ENCODE measurements at regions of chr9 and their contacts with region 1.

Region 1: DNA sequence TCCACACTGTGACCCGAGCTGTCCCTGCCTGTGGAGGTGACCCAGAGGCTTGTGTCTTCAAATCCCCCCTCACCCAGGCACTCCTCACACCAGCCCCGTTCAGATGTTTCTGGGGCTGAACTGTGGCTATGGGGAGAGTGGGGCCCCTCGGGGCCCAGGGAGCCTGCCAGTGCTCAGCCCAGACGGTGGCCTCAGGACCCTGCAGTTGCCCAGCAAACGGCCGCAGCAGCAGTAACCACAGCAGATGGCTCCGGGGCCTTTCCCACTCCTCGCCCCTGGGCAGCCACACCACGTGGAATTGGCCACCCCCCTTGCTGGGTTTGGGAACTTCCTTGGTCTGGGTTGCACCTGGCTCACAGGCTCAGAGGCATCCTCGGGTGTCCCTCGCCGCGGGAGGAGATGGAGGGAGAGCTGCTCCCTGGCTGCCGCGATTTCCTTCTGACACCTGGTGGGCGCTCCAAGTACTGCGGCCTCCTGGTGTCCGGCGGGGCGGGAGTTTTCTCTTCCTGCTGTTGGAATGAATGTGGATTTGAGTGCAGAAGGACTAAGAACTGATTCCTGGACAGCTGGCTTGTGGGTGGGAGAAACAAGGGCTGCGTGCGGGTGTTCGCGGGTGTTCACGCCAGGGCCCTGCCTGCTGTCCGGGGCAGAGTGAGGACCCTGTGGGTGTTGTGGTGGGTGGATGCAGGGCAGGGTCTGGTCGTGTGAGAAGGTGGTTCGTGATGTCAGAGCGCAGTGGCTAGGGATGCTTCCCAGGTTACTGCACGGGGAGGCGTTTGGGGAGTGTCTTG is 97.5 kb downstream of the COL5A1 start:
- DNase-seq: peak; percentile 13
- ATAC-seq: peak; percentile 71
- H3K4me3 ChIP-seq: no peak overlapping the region
- H3K27ac ChIP-seq: no peak overlapping the region
- H3K4me1 ChIP-seq: 0 out of 2 replicates have a peak, but pooled peaks cover 5% of the 10 kb centered on the region
- H3K27me3 ChIP-seq: peaks cover 11 to 50% of the 10 kb centered on the region in 2 experiments
- CTCF ChIP-seq: peak; percentile 79
- EP300 ChIP-seq: no peak
- POLR2A ChIP-seq: no peak
- RAD21 ChIP-seq: peak; percentile 60

Region 2: GRCh38 chr9:134449221-134449894 is 289.7 kb before region 1 on chr9:
- CTCF ChIA-PET with region 1: interaction called, 7 read pairs
- POLR2A ChIA-PET with region 1: no interaction called
- in situ Hi-C with region 1: loop called (anchors 10 kb)
- intact Hi-C with region 1: loop called (anchors 5 kb)
- DNase-seq: peak; percentile 77
- ATAC-seq: peak; percentile 87
- H3K4me3 ChIP-seq: no peak overlapping the region
- H3K27ac ChIP-seq: no peak overlapping the region
- H3K4me1 ChIP-seq: no peaks in the 10 kb centered on the region
- H3K27me3 ChIP-seq: peaks cover 0 to 2% of the 10 kb centered on the region in 2 experiments; a peak in 1 of 5 replicates
- CTCF ChIP-seq: peak; percentile 93
- EP300 ChIP-seq: no peak
- POLR2A ChIP-seq: no peak
- RAD21 ChIP-seq: peak; percentile 89

Region 3: GRCh38 chr9:134455934-134456739 is 282.9 kb before region 1 on chr9:
- CTCF ChIA-PET with region 1: no interaction called
- POLR2A ChIA-PET with region 1: no interaction called
- in situ Hi-C with region 1: loop called (anchors 10 kb)
- intact Hi-C with region 1: no loop called
- DNase-seq: no peak
- ATAC-seq: no peak
- H3K4me3 ChIP-seq: no peak overlapping the region
- H3K27ac ChIP-seq: no peak overlapping the region
- H3K4me1 ChIP-seq: no peaks in the 10 kb centered on the region
- H3K27me3 ChIP-seq: peaks cover 2 to 43% of the 10 kb centered on the region in 2 experiments; a peak in 4 of 5 replicates
- CTCF ChIP-seq: no peak
- EP300 ChIP-seq: no peak
- POLR2A ChIP-seq: no peak
- RAD21 ChIP-seq: no peak

Region 4: DNA sequence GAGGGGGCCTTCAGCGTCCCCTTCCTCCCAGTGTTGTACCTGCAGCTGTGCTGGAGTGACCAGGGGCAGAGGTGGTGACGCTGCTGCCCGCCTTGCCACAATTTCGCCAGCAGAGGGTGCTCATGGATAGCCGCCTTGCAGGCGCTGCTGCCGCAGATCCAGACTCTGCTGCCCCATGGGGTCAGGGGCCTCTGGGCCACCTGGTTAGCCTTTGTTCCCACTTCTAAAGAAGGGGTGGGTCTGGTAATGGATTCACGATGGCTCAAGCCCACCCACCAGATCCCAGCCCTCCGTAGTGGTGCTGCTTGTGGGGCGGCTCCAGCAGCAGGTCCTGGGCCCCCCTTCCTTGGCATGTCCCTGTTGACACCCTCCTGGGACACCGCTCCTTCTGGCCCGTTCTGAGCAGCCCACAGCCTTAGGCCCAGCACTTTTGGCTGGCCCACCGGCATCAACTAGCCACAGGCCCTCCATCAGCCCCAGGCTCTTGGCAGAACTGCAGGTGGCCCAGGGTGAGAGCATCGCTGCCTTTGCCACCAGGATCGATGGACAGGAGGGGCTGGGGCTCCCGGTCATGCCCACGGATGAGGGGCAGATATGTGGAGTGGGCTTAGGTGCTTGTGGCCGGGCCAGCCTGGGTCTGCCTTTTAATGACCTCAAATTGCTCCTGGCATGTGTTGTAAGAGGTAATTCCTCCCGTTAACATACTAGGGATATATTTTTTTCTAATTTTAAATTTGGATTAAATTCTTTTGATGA is 40.3 kb before region 1 on chr9:
- CTCF ChIA-PET with region 1: interaction called, 23 read pairs
- POLR2A ChIA-PET with region 1: no interaction called
- in situ Hi-C with region 1: loop called (anchors 5 kb)
- intact Hi-C with region 1: loop called (anchors 2 kb)
- DNase-seq: peak; percentile 50
- ATAC-seq: peak; percentile 88
- H3K4me3 ChIP-seq: no peak overlapping the region
- H3K27ac ChIP-seq: no peak overlapping the region
- H3K4me1 ChIP-seq: no peaks in the 10 kb centered on the region
- H3K27me3 ChIP-seq: peaks cover 4 to 47% of the 10 kb centered on the region in 2 experiments; a peak in 4 of 5 replicates
- CTCF ChIP-seq: peak; percentile 93
- EP300 ChIP-seq: no peak
- POLR2A ChIP-seq: no peak
- RAD21 ChIP-seq: peak; percentile 89

Region 5: DNA sequence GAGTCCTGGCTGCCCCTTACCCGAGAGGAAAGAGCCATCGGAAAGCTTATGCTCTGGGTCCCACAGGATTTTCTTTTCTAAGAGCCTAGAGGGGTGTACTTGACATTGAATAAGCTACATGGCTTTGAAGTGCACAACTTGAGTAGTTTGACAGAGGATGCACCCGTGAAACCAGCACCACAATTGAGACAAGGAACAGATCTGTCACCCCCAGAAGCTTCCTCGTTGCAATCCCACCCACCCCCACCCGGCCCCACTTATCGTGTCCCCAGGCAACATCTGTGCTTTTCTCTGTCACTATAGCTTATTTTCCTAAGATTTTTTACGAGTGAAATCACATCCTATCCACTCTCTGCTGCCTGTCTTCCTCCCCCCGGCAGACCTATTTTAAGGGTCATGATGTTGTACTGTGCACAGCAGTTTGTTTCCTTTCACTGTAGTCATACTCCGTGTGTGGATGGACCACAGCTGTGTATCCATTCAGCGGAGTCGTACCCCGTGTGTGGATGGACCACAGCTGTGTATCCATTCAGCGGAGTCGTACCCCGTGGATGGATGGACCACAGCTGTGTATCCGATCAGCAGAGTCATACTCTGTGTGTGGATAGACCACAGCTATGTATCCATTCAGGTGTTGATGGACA is 132.8 kb after region 1 on chr9:
- CTCF ChIA-PET with region 1: no interaction called
- POLR2A ChIA-PET with region 1: no interaction called
- in situ Hi-C with region 1: no loop called
- intact Hi-C with region 1: no loop called
- DNase-seq: no peak
- ATAC-seq: no peak
- H3K4me3 ChIP-seq: no peak overlapping the region
- H3K27ac ChIP-seq: no peak overlapping the region
- H3K4me1 ChIP-seq: no peaks in the 10 kb centered on the region
- H3K27me3 ChIP-seq: peaks cover 2 to 27% of the 10 kb centered on the region in 2 experiments; a peak in 2 of 5 replicates
- CTCF ChIP-seq: no peak
- EP300 ChIP-seq: no peak
- POLR2A ChIP-seq: no peak
- RAD21 ChIP-seq: no peak

Measured in HepG2 (cell line).